BJ (cell line): ENCODE measurements at regions of chr1 and their contacts with region 1.

Region 1: GRCh38 chr1:178532392-178532791 is 19.5 kb downstream of the TEX35 start:
- DNase-seq: no peak
- H3K4me3 ChIP-seq: no peak overlapping the region
- H3K27me3 ChIP-seq: no peaks in the 10 kb centered on the region
- CTCF ChIP-seq: peak; percentile 90

Region 2: GRCh38 chr1:178300352-178300699 is 232.1 kb before region 1 on chr1:
- CTCF ChIA-PET with region 1: interaction called, 26 read pairs
- POLR2A ChIA-PET with region 1: no interaction called
- DNase-seq: no peak
- H3K4me3 ChIP-seq: no peak overlapping the region
- H3K27me3 ChIP-seq: no peaks in the 10 kb centered on the region
- CTCF ChIP-seq: no peak

Region 3: DNA sequence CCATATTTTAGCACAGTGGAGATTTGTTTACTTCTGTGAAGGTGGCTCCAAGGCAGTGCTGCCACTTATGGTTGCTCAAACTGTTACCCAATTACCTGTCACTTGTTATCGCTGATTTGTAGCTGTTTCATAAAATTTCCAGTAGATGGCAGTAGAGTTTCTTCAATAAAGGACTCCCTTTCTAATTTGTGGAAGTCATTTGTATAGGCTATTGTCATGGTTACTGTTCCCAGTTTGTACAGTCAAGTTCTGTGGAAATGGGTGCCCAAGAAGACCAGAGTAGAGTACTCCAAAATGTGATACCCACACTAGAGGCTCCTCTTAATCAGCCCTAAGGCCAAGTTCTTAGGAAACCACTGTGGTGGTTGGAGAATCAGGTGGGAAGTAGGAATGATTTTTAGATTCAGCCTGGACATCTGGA is 221.7 kb before region 1 on chr1:
- CTCF ChIA-PET with region 1: interaction called, 14 read pairs
- POLR2A ChIA-PET with region 1: interaction called, 4 read pairs
- DNase-seq: peak; percentile 46
- H3K4me3 ChIP-seq: no peak overlapping the region
- H3K27me3 ChIP-seq: no peaks in the 10 kb centered on the region
- CTCF ChIP-seq: peak; percentile 66

Region 4: GRCh38 chr1:178451529-178451928 is 80.9 kb before region 1 on chr1:
- CTCF ChIA-PET with region 1: no interaction called
- POLR2A ChIA-PET with region 1: no interaction called
- DNase-seq: peak; percentile 11
- H3K4me3 ChIP-seq: no peak overlapping the region
- H3K27me3 ChIP-seq: no peaks in the 10 kb centered on the region
- CTCF ChIP-seq: no peak

Region 5: GRCh38 chr1:178542560-178543356 is 10.4 kb after region 1 on chr1:
- CTCF ChIA-PET with region 1: interaction called, 30 read pairs
- POLR2A ChIA-PET with region 1: no interaction called
- DNase-seq: peak; percentile 28
- H3K4me3 ChIP-seq: peak overlapping the region; percentile 62
- H3K27me3 ChIP-seq: no peaks in the 10 kb centered on the region
- CTCF ChIP-seq: peak; percentile 81